Ovary (tissue), 10 donors: ENCODE measurements at regions of chr15 and their contacts with region 1.

Region 1: GRCh38 chr15:70875001-70875782 is 17.0 kb downstream of the THAP10 start:
- DNase-seq: no peak
- H3K4me3 ChIP-seq: no peak overlapping the region
- H3K27ac ChIP-seq: no peak overlapping the region
- H3K4me1 ChIP-seq: peaks cover 2% of the 10 kb centered on the region
- H3K27me3 ChIP-seq: no peaks in the 10 kb centered on the region
- CTCF ChIP-seq: peak in 2 of 3 donors; percentile 53 to 55
- EP300 ChIP-seq: no peak
- POLR2A ChIP-seq: no peak

Region 2: DNA sequence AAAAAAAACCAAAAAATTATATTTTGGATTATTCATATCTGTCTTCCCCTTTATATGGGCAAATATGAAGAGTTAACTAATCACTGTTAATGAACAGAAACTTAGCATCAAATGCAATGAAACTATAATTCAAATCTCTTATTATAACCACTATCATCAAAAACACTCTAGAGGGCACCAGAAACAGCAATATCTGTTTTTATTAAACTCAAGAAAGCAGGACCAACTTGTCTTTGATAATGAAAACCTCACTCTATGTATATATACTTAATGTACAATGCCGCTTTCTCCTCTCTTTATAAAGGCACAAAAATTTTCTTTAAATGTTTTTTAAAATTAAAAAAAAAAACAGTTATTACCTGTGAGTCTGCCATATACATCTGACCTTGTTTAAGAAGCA is 204.5 kb before region 1 on chr15:
- intact Hi-C with region 1: loop called in 1 of 4 experiments (anchors 10 kb)
- DNase-seq: no peak
- H3K4me3 ChIP-seq: no peak overlapping the region
- H3K27ac ChIP-seq: no peak overlapping the region
- H3K4me1 ChIP-seq: peaks cover 3% of the 10 kb centered on the region
- H3K27me3 ChIP-seq: no peaks in the 10 kb centered on the region
- CTCF ChIP-seq: no peak
- EP300 ChIP-seq: no peak
- POLR2A ChIP-seq: no peak

Region 3: DNA sequence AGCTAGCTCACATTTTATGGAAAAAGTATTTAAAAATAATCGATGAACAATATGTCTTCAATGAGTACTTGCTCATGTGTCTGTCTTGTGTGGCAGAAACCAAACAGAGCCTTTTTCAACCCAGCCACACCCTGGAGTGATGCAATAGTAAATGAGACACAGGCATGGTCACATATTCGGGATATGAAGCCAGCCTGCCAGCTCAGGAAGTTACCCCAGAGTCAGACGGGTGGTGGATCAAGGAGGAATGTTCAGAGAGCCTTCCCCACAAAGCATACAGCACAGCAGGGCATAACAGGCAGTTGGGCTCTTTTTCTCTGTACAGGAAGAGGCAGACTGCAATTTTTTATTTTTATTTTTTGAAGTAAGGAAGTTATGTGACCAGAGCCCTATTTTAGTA is 48.6 kb before region 1 on chr15:
- intact Hi-C with region 1: loop called in 1 of 4 experiments (anchors 10 kb)
- DNase-seq: peak in 1 of 5 donors; percentile 46
- H3K4me3 ChIP-seq: no peak overlapping the region
- H3K27ac ChIP-seq: no peak overlapping the region
- H3K4me1 ChIP-seq: peaks cover 3% of the 10 kb centered on the region
- H3K27me3 ChIP-seq: no peaks in the 10 kb centered on the region
- CTCF ChIP-seq: no peak
- EP300 ChIP-seq: no peak
- POLR2A ChIP-seq: no peak